HEK293T (cell line): ENCODE measurements at regions of chr20 and their contacts with region 1.

Region 1: GRCh38 chr20:354298-355064 is 7.6 kb downstream of the NRSN2 start:
- DNase-seq: peak; percentile 89

Region 2: DNA sequence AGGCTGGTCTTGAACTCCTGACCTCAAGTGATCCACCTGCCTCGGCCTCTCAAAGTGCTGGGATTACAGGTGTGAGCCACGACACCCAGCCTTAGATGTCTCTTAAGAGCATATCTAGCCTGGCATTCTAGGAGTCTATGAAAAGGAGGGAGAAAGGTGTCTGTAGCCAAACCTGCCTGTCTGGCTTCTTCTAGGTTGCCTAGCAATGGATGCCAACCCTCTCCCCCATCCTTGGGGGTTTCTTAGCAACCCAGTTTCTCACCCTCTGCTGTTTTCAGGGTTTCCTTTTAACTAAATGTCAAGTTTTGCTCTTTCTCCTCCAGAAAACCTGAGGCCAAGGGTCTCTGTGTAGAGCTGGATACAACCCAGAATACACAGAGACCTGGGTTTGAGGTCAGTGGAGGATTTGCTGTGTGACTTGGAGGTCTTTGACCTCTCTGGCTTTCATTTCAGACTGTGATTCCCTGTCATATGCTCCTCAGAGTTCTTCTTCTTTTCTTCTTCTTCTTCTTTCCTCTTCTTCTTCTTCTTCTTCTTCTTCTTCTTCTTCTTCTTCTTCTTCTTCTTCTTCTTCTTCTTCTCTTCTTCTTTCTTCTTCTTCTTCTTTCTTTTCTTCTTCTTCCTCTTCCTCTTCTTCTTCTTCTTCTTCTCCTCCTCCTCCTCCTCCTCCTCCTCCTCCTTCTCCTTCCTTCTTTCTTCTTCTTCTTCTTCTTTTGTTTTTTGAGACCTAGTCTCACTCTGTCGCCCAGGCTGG is 18.6 kb before region 1 on chr20:
- CTCF ChIA-PET with region 1: no interaction called
- POLR2A ChIA-PET with region 1: no interaction called
- DNase-seq: no peak

Region 3: GRCh38 chr20:389220-389619 is 34.7 kb after region 1 on chr20:
- CTCF ChIA-PET with region 1: no interaction called
- POLR2A ChIA-PET with region 1: no interaction called
- DNase-seq: no peak

Region 4: DNA sequence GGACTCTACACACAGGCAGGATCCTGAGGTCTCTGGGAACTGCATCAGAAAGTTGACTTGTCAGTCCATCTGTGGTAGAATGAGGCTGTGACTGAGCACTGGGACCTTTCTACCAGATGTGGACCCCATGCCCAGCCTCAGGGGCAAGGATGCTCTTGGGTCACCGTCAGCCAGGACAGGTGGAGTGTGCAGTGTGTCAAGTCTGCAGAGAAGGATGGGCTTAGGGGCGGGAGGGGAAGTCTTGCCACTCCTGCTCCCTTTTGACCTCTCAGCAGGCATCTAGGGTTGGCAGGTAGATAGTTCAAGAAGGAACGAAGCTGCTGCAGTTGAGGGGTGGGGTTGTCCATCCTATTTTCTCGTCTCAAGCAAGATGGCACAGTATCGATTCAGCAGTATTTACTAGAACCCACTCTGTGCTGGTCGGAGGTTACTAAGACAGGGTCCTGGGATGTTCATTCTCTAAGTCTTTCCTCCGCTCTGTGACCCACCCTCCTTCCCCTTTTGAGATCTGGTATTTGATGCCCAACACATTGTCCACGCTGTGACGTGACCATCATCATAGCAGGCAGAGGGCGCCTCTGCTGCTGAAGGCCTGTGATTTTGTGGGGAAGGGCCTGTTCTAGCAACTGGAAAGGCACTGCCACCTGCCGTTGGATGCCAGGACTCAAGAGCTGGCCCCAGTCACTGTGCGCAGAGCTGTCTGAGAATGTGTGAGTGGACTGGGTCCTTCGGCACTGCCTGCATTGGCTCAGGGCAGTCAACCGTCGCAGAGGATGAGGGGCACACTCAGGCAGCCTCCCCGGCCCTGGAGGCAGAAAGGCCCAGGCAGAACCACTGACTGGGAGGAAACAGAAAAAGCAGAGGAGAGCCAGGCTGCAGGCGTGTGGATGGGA is 76.8 kb after region 1 on chr20:
- CTCF ChIA-PET with region 1: interaction called, 13 read pairs
- POLR2A ChIA-PET with region 1: no interaction called
- DNase-seq: peak; percentile 72

Region 5: GRCh38 chr20:444862-445426 is 90.5 kb after region 1 on chr20:
- CTCF ChIA-PET with region 1: no interaction called
- POLR2A ChIA-PET with region 1: no interaction called
- DNase-seq: no peak

Region 6: GRCh38 chr20:528923-529604 is 174.6 kb after region 1 on chr20:
- CTCF ChIA-PET with region 1: no interaction called
- POLR2A ChIA-PET with region 1: no interaction called
- DNase-seq: no peak